ENCODE measurements at regions of chr17 and their contacts with region 1.

Region 1: DNA sequence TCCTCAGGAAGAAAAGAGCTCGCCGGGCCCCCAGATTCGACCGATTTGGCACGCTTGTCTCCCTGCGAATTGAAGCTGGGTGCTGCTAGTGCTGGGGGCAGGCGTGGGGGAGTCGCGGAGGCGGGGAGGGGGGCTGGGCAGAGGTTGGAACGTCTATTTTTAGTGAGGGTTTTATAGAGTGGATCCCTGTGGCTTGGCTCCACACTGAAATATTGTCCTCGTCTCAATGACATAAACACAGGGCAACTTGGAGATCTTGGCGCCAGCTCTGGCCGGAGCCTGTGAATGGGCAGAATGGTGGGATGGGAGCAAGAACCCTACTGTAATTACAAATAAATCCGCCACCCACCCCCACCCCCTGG is 15.7 kb upstream of the NOG start:
- DNase-seq: no peak
- H3K4me3 Mint-ChIP-seq: no peak overlapping the region
- H3K27ac Mint-ChIP-seq: no peak overlapping the region
- H3K4me1 Mint-ChIP-seq: no peaks in the 10 kb centered on the region
- H3K27me3 Mint-ChIP-seq: peaks cover 13% of the 10 kb centered on the region

Region 2: GRCh38 chr17:57195785-57196460 is 618.1 kb after region 1 on chr17:
- CTCF ChIA-PET with region 1: no interaction called
- POLR2A ChIA-PET with region 1: interaction called, 11 read pairs
- DNase-seq: no peak
- H3K4me3 Mint-ChIP-seq: no peak overlapping the region
- H3K27ac Mint-ChIP-seq: no peak overlapping the region
- H3K4me1 Mint-ChIP-seq: no peaks in the 10 kb centered on the region
- H3K27me3 Mint-ChIP-seq: peaks cover 8% of the 10 kb centered on the region